CD4-positive, alpha-beta memory T cell (primary cell): ENCODE measurements at regions of chr12 and their contacts with region 1.

Region 1: DNA sequence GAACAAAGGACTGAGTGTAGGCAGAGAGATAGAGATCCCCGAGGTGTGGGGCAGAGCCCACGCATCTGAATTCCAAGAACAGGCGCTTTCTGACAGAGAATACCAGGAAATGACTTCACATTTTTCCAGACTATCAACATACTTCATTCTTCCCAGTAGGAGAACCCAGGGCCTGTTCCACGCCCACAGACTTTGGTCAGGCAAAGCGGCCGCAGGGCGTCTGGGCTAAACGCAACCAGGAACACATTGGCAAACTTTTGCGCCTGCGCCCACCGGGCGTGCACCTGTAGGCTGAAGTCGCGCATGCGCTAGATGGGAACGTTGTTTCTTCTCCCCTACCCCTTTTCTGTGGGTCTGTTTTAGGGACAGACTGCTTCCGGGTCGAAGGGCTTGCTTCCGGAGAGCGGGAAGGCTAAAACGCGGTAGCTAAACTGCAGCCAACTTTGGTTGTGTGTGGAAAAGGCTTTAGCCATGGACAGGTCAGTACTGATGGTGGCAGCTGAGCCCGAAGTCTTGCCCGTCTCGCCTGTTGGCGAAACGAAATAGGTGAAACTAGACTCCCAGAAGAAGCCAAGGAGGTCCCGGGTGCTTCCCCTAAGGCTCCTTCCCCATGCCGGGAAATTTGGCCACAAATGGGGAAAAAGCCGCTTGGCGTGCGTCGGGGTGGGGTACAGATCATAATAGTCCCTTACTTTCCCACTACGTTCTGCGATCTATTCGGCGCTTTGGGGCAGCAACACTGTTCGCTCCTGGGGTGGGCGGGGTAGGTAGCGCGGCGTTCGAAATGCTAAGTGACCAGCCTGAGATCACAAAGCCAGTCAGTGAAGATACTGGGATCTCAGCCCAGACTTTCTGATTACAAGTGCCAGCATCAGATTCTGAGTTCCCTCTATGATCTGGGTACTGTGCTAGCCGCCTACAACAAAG is at the start of gene NUP107:
- DNase-seq: peak; percentile 95 to 98 (median 95)
- H3K4me3 ChIP-seq: peak within 1 kb of the TSS; percentile 90 to 98
- H3K4me3 Mint-ChIP-seq: peak within 1 kb of the TSS; percentile 98 to 99 (median 98)
- H3K27ac ChIP-seq: peak within 1 kb of the TSS; percentile 85
- H3K27ac Mint-ChIP-seq: peak within 1 kb of the TSS; percentile 91 to 100 (median 99)
- H3K4me1 ChIP-seq: peaks cover 30% of the 10 kb centered on the region
- H3K4me1 Mint-ChIP-seq: peaks cover 14 to 44% (median 29%) of the 10 kb centered on the region in 4 donors
- H3K27me3 ChIP-seq: no peaks in the 10 kb centered on the region
- H3K27me3 Mint-ChIP-seq: no peaks in the 10 kb centered on the region
- total RNA-seq, gene NUP107: 68.9 to 70.7 TPM

Region 2: DNA sequence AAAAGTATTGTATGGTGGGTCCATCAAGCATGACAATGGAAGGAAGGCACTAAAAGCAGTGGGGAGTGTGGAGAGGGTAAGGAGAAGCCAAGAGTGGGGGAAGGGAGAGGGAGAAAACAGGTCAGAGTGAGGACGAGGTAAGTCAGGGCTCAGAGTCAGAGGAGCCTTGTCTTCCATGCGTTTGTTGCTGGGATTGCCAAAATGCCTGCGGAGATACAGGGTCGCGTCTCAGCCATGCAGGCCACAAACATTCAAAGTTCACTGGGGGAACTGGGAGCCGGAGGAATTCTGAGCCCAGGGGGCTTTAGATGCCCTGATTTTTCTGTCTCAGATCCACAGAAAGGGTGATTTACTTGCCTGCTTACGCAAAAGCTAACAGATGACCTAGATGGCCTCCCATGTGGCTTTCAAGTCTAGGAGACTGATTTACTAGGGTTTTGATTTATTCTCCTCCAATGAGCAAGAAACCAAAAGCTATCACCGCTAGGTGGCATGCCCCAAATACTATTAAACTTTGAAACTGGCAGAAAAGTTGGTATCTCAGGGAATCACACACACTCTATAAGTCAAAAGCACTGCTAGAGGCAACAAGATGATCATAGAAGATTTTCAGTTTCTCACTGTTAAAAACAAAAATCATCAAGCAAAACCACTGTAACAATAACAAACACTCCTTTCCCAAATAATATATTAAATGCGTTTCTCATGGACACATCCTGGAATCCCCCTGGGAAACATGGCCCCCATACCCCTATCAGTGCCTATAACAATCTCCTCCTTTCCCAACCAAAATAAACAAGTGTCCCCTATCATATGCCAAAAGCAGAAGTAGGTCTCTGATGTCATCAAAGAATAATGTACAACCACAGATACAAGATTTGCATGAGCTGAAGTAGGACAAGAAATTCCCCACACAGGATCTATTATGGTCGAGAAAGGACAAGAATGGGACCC is 328.0 kb before region 1 on chr12:
- CTCF ChIA-PET with region 1: interaction called, 4 read pairs
- POLR2A ChIA-PET with region 1: interaction called, 4 read pairs
- intact Hi-C with region 1: loop called (anchors 1 kb)
- DNase-seq: peak; percentile 71 to 76 (median 74)
- H3K4me3 ChIP-seq: no peak overlapping the region
- H3K4me3 Mint-ChIP-seq: no peak overlapping the region
- H3K27ac ChIP-seq: no peak overlapping the region
- H3K27ac Mint-ChIP-seq: peak overlapping the region; percentile 2 to 80 (median 65)
- H3K4me1 ChIP-seq: peaks cover 21% of the 10 kb centered on the region
- H3K4me1 Mint-ChIP-seq: peaks cover 18 to 35% (median 24%) of the 10 kb centered on the region in 4 donors
- H3K27me3 ChIP-seq: no peaks in the 10 kb centered on the region
- H3K27me3 Mint-ChIP-seq: no peaks in the 10 kb centered on the region

Region 3: GRCh38 chr12:68538726-68539614 is 147.9 kb before region 1 on chr12:
- CTCF ChIA-PET with region 1: no interaction called
- POLR2A ChIA-PET with region 1: no interaction called
- intact Hi-C with region 1: loop called (anchors 5 kb)
- DNase-seq: peak; percentile 64 to 78 (median 76)
- H3K4me3 ChIP-seq: no peak overlapping the region
- H3K4me3 Mint-ChIP-seq: peak overlapping the region; percentile 48 to 83 (median 66)
- H3K27ac ChIP-seq: no peak overlapping the region
- H3K27ac Mint-ChIP-seq: peak overlapping the region; percentile 10 to 91 (median 63)
- H3K4me1 ChIP-seq: peaks cover 35% of the 10 kb centered on the region
- H3K4me1 Mint-ChIP-seq: peaks cover 26 to 56% (median 40%) of the 10 kb centered on the region in 4 donors
- H3K27me3 ChIP-seq: no peaks in the 10 kb centered on the region
- H3K27me3 Mint-ChIP-seq: no peaks in the 10 kb centered on the region

Region 4: DNA sequence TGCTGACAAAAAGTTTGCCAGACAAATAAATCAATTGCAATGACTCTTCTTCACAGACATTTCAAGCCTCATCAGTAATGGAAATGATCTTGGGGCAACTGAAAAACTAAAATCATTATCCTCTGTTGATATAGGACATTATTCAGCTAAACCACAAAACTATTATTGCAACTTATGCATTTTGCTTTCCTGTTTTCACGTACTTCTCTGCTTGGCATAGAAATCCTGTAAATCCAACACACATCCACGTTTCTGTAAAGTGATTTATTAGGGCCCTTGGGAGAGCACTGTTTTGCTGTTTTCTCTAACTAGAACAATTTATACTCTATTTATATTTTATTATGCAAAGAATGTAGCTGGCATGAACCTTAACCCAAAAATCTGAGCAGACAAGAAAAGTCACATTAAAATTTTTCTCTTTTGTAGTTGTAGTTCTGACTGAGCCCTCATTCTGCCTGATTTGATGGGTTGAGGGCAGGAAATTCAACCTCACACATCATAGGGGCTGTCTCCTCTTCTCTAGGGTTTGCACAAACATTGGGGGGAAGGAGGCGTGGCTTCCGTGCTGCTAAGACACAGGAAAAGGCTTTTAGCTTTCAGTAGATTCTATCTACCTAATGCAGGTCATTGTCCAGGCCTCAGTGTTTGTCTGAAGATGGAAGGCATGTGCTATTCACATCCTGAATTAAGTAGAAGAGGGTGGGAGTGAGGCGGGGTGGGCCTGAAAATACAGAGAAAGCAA is 11.6 kb before region 1 on chr12:
- CTCF ChIA-PET with region 1: interaction called, 3 read pairs
- POLR2A ChIA-PET with region 1: interaction called, 16 read pairs
- intact Hi-C with region 1: loop called (anchors 1 kb)
- DNase-seq: peak; percentile 66 to 76 (median 75)
- H3K4me3 ChIP-seq: no peak overlapping the region
- H3K4me3 Mint-ChIP-seq: peak overlapping the region; percentile 60 to 89 (median 73)
- H3K27ac ChIP-seq: peak overlapping the region; percentile 24
- H3K27ac Mint-ChIP-seq: peak overlapping the region; percentile 80 to 94 (median 92)
- H3K4me1 ChIP-seq: peaks cover 55% of the 10 kb centered on the region
- H3K4me1 Mint-ChIP-seq: peaks cover 32 to 59% (median 45%) of the 10 kb centered on the region in 4 donors
- H3K27me3 ChIP-seq: no peaks in the 10 kb centered on the region
- H3K27me3 Mint-ChIP-seq: no peaks in the 10 kb centered on the region

Region 5: DNA sequence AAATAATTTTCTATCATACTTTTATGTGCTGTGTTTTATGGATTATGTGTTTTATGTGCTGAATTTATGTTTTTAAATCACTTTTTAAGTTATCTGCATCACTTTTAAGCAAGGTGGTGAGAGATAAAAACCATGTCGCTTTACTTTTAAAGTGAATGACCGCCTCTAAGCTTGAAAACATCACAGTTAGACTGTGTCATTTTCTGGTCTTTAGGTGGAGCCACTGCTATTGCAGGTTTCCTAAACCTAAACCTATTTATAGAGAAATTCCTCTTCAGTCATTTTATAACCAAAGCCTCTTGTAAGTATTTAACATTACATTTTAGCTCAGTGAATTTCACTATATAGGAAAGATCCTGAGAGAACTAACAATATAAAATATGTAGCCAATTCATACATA is 100.1 kb after region 1 on chr12:
- CTCF ChIA-PET with region 1: no interaction called
- POLR2A ChIA-PET with region 1: no interaction called
- intact Hi-C with region 1: no loop called
- DNase-seq: no peak
- H3K4me3 ChIP-seq: no peak overlapping the region
- H3K4me3 Mint-ChIP-seq: no peak overlapping the region
- H3K27ac ChIP-seq: no peak overlapping the region
- H3K27ac Mint-ChIP-seq: no peak overlapping the region
- H3K4me1 ChIP-seq: no peaks in the 10 kb centered on the region
- H3K4me1 Mint-ChIP-seq: no peaks in the 10 kb centered on the region
- H3K27me3 ChIP-seq: no peaks in the 10 kb centered on the region
- H3K27me3 Mint-ChIP-seq: no peaks in the 10 kb centered on the region

Region 6: DNA sequence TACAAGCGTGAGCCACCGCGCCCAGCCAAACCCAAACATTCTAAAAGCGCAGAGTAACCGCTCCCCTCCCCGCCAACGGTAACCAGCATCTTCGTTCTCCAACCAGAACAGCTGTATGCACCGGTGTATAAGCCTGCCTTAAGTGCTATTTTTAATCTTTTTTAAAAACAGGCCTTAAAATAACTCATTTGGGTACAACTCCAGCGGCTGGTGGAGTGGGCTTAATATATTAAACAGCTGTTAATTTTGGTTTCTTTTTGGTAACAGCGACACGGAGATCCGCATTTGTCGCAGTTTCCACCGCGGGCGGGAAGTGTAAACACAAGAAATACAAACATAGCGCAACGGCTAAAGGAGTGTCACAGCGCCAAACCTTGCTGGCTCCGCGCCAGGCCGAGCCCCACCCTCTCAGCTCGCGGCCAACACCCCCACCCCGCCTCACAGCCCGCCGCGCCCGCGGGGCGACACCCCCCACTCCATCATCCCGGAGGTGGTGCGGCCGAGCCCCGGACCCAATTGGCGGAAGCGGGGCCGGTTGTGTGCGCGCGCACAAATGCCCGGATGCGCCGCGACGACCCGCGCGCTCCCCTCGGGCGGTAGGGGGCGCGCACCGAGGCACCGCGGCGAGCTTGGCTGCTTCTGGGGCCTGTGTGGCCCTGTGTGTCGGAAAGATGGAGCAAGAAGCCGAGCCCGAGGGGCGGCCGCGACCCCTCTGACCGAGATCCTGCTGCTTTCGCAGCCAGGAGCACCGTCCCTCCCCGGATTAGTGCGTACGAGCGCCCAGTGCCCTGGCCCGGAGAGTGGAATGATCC is 120.9 kb after region 1 on chr12 and contains the start of gene MDM2:
- CTCF ChIA-PET with region 1: no interaction called
- POLR2A ChIA-PET with region 1: interaction called, 20 read pairs
- intact Hi-C with region 1: loop called (anchors 1 kb)
- DNase-seq: peak; percentile 97 to 99 (median 99)
- H3K4me3 ChIP-seq: peak within 1 kb of the TSS; percentile 42 to 94
- H3K4me3 Mint-ChIP-seq: peak within 1 kb of the TSS; percentile 95 to 97 (median 96)
- H3K27ac ChIP-seq: peak within 1 kb of the TSS; percentile 92
- H3K27ac Mint-ChIP-seq: peak within 1 kb of the TSS; percentile 98 to 99 (median 99)
- H3K4me1 ChIP-seq: peaks cover 28% of the 10 kb centered on the region
- H3K4me1 Mint-ChIP-seq: peaks cover 9 to 33% (median 22%) of the 10 kb centered on the region in 4 donors
- H3K27me3 ChIP-seq: no peaks in the 10 kb centered on the region
- H3K27me3 Mint-ChIP-seq: no peaks in the 10 kb centered on the region
- total RNA-seq, gene MDM2: 117 to 121 TPM